B cell (primary cell): ENCODE measurements at regions of chr20 and their contacts with region 1.

Region 1: DNA sequence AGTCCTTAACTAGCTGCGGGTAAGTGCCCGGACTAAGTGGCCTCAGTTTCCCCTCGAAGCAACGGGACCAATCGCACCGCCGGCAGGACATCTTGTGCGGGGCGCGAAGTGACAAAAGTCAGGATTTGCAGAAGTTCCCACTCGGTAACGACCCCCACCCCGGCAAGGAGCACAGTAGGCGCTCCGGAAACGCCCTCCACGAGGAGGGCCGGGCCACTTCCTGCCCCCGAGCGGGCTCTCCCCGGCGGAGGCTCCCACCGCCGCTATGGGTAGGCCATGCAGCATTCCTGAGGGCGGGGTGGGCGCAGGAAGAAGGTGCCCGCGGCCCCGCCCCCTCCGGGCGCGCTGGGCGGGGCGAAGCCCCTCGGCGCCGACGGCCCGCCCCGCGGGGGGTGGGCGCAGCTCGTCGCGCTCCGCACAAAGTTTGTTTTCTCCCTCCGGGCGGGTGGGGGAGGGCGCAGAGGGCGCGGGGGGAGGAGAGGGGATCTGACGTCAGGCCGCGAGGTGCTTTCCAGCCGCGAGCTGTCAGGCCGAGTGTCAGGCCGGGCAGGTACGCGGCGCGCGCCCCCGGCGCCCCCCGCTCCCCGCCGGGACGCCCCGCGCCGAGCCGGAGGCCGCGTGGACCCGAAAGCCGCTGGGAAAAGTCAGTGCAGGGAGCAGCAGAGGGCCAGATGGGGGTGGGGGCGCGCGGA is at the start of gene TGIF2:
- DNase-seq: peak; percentile 94
- ATAC-seq: peak; percentile 80
- H3K4me3 ChIP-seq: peak within 1 kb of the TSS; percentile 22 to 95 (median 88)
- H3K4me3 Mint-ChIP-seq: peak within 1 kb of the TSS; percentile 92
- H3K27ac ChIP-seq: peak within 1 kb of the TSS; percentile 97 to 100
- H3K27ac Mint-ChIP-seq: peak within 1 kb of the TSS; percentile 98
- H3K4me1 ChIP-seq: peaks cover 23 to 34% of the 10 kb centered on the region in 2 donors
- H3K4me1 Mint-ChIP-seq: peaks cover 34% of the 10 kb centered on the region
- H3K27me3 ChIP-seq: no peaks in the 10 kb centered on the region
- H3K27me3 Mint-ChIP-seq: no peaks in the 10 kb centered on the region
- CTCF ChIP-seq: no peak
- total RNA-seq, gene TGIF2: 45.6 and 46.1 TPM in 2 replicates

Region 2: DNA sequence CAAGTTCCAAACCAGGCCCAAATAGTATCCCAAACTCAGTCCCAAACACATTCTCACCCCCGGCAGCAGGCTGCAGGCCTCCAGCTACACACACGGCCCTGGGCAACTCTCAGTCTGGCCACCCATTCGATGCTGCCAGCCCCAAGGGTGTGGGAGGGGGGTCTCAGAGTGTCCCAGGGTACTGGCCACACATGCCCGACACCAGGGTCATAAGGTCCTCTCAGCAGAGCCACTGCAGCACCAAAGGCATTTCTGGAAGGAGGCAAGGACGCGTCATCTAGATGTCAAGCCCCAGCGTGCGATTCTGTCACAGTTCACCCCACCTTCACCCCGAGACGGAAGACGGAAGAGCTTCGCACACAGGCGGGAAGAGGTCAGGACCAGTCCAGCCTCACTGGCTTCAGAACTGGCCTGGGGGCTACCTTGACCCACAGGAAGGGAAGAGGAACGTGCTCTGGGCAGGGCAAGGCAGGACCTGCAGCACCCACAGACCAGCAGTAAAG is 22.4 kb before region 1 on chr20:
- CTCF ChIA-PET with region 1: interaction called, 4 read pairs
- POLR2A ChIA-PET with region 1: no interaction called
- intact Hi-C with region 1: loop called (anchors 1 kb)
- DNase-seq: no peak
- ATAC-seq: no peak
- H3K4me3 ChIP-seq: no peak overlapping the region
- H3K4me3 Mint-ChIP-seq: no peak overlapping the region
- H3K27ac ChIP-seq: no peak overlapping the region
- H3K27ac Mint-ChIP-seq: no peak overlapping the region
- H3K4me1 ChIP-seq: peaks cover 0 to under 1% of the 10 kb centered on the region in 2 donors
- H3K4me1 Mint-ChIP-seq: peaks cover 4% of the 10 kb centered on the region
- H3K27me3 ChIP-seq: no peaks in the 10 kb centered on the region
- H3K27me3 Mint-ChIP-seq: no peaks in the 10 kb centered on the region
- CTCF ChIP-seq: no peak

Region 3: GRCh38 chr20:36562724-36563123 is 10.5 kb before region 1 on chr20:
- CTCF ChIA-PET with region 1: interaction called, 22 read pairs
- POLR2A ChIA-PET with region 1: interaction called, 3 read pairs
- intact Hi-C with region 1: no loop called
- DNase-seq: no peak
- ATAC-seq: no peak
- H3K4me3 ChIP-seq: no peak overlapping the region
- H3K4me3 Mint-ChIP-seq: no peak overlapping the region
- H3K27ac ChIP-seq: no peak overlapping the region
- H3K27ac Mint-ChIP-seq: no peak overlapping the region
- H3K4me1 ChIP-seq: no peaks in the 10 kb centered on the region
- H3K4me1 Mint-ChIP-seq: no peaks in the 10 kb centered on the region
- H3K27me3 ChIP-seq: no peaks in the 10 kb centered on the region
- H3K27me3 Mint-ChIP-seq: no peaks in the 10 kb centered on the region
- CTCF ChIP-seq: no peak

Region 4: DNA sequence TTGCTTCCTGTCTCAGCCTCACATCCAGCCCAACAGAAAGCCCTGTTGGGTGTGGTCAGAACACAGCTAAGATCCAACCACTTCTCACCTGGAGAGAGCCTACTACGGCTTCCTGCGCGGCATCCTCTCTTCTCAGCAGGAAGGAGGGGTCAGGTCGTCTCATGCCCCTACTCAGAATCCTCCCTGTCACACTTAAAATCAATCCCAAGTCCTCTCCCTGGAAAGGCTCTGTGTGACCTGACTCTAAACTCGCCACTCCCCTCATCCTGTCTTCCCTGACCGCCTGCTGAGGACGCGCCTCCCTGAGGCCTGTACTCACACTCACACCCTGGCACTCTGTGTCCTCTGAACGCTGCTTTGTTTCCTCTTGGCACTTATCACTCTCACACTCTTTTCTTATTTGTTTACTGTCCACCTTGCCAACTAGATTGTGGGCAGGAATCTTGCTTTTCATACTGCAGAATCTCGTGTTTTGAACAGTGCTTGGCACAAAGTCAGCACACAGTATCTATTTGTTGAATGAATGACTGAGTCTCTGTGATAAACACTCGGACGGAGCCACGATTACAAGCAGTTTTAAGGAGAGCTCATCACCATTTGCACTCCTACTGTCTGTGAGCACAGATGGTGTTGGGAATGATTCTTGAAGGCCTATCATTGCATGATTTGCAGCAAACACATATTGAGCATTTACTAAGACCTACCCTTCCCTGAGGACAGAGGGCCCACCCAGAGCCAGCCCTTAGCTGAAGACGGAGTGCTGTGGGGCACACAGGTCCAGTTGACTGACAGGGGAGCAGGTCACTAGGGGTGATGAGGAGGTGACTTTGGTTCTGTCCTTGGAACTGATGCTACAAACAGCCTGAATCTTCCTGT is 51.1 kb after region 1 on chr20:
- CTCF ChIA-PET with region 1: no interaction called
- POLR2A ChIA-PET with region 1: no interaction called
- intact Hi-C with region 1: no loop called
- DNase-seq: no peak
- ATAC-seq: no peak
- H3K4me3 ChIP-seq: no peak overlapping the region
- H3K4me3 Mint-ChIP-seq: no peak overlapping the region
- H3K27ac ChIP-seq: no peak overlapping the region
- H3K27ac Mint-ChIP-seq: no peak overlapping the region
- H3K4me1 ChIP-seq: peaks cover 0 to under 1% of the 10 kb centered on the region in 2 donors
- H3K4me1 Mint-ChIP-seq: peaks cover 1% of the 10 kb centered on the region
- H3K27me3 ChIP-seq: no peaks in the 10 kb centered on the region
- H3K27me3 Mint-ChIP-seq: no peaks in the 10 kb centered on the region
- CTCF ChIP-seq: no peak